ENCODE measurements at regions of chr2 and their contacts with region 1.

Region 1: DNA sequence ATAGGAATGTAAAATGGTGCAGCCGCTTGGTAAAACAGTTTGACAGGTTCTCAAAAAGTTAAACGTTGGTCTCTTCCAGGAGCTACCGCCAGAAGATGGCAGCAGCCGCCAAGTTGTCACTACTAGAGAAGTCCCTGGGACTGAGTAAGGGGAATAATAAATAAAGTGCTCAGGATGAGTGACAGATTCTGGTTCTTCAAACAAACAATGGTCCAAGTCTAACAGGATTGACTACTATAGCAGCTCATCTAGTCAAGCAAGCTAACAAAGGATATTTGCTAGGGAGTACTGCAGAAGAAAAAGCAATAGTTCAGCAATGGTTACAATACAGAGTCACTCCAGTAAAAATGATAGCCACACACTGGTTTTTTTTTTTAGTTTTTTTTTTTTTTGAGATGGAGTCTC is 3.8 kb upstream of the ANAPC1 start:
- DNase-seq: peak; percentile 72
- ATAC-seq: no peak
- H3K4me3 Mint-ChIP-seq: no peak overlapping the region
- H3K27ac Mint-ChIP-seq: no peak overlapping the region
- H3K4me1 Mint-ChIP-seq: peaks cover 10% of the 10 kb centered on the region
- H3K27me3 Mint-ChIP-seq: peaks cover 2% of the 10 kb centered on the region

Region 2: GRCh38 chr2:111897924-111898702 is 10.3 kb after region 1 on chr2 and contains the start of gene MERTK:
- CTCF ChIA-PET with region 1: interaction called, 13 read pairs
- POLR2A ChIA-PET with region 1: interaction called, 3 read pairs
- DNase-seq: peak; percentile 54
- ATAC-seq: peak; percentile 87
- H3K4me3 Mint-ChIP-seq: peak within 1 kb of the TSS; percentile 65
- H3K27ac Mint-ChIP-seq: peak within 1 kb of the TSS; percentile 32
- H3K4me1 Mint-ChIP-seq: peaks cover 14% of the 10 kb centered on the region
- H3K27me3 Mint-ChIP-seq: peaks cover 34% of the 10 kb centered on the region
- total RNA-seq, gene MERTK: 0.10 to 0.21 TPM

Region 3: DNA sequence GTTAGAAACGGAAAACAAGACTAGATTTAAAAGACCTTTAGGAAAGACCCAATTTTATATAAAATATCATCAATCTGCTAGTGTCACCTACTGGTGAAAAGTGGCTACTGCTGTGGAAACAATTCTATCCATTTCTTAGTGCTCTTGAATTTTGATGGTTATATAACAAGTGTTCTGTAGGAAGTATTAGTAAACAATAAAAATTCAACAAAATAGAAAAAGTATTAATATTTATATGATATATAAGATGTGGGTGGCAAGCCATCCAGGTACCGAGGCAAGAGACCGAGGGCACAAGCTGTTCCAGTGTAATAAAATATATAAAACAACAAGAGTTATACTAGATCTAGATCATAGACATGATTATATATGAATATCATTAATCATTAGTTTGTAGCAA is 161.1 kb after region 1 on chr2:
- CTCF ChIA-PET with region 1: interaction called, 21 read pairs
- POLR2A ChIA-PET with region 1: interaction called, 4 read pairs
- DNase-seq: peak; percentile 45
- ATAC-seq: peak; percentile 61
- H3K4me3 Mint-ChIP-seq: no peak overlapping the region
- H3K27ac Mint-ChIP-seq: no peak overlapping the region
- H3K4me1 Mint-ChIP-seq: peaks cover 7% of the 10 kb centered on the region
- H3K27me3 Mint-ChIP-seq: peaks cover 20% of the 10 kb centered on the region

Measured in activated CD8-positive, alpha-beta T cell treated with anti-CD3 and anti-CD28 coated beads, Interleukin-2, amount 10 ng/mL, durations not matched to agents 7 days and 5 days (primary cell).